ENCODE measurements at regions of chr9 and their contacts with region 1.

Region 1: DNA sequence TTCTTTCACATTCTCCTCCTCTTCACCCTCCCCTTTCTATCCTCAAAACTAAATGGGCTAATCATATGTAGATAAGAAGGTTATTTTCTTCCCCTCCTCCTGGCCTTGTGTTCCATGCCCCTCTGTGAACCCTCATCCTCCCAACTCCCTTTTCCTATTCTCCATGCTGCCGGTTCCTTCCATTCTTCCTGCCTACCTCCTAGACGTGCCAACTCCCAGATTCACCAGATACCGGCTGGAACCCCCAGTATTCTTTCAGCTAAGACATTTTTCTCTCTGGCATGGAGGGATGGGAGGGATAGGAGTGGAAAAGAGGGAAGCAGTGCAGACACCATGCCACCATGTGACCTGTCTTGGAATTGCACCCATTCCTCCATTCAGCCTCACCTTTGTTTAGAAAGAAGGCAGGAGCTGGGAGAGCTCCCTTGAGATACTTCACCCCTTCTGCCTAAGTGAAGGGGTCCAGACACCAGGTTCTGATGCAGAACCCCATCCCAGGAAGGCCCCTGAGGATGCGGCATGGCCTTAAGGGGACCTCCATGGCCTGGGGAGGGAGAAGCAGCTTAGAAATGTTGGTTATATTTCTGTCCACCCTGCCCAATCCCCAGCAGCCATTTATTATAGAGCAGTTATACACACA is 4.8 kb downstream of the DNAJB5 start:
- DNase-seq: peak in 32 of 42 donors; percentile 31 to 86 (median 62)

Region 2: GRCh38 chr9:34809504-34810186 is 184.7 kb before region 1 on chr9:
- intact Hi-C with region 1: no loop called
- DNase-seq: peak in 29 of 42 donors; percentile 1 to 47 (median 15)

Region 3: GRCh38 chr9:34899535-34900158 is 94.7 kb before region 1 on chr9:
- intact Hi-C with region 1: loop called (anchors 5 kb)
- DNase-seq: peak; percentile 49 to 95 (median 89)

Measured in head of caudate nucleus (tissue), 42 donors.